ENCODE measurements at regions of chr1 and their contacts with region 1.

Region 1: GRCh38 chr1:51044834-51045233 is 57.2 kb upstream of the C1orf185 start:
- DNase-seq: peak in 3 of 14 experiments; percentile 13 to 17 (median 16)
- ATAC-seq: no peak
- H3K4me3 ChIP-seq: no peak overlapping the region
- H3K4me3 Mint-ChIP-seq: no peak overlapping the region
- H3K27ac ChIP-seq: no peak overlapping the region
- H3K27ac Mint-ChIP-seq: no peak overlapping the region
- H3K4me1 ChIP-seq: no peaks in the 10 kb centered on the region
- H3K4me1 Mint-ChIP-seq: no peaks in the 10 kb centered on the region
- H3K27me3 ChIP-seq: peaks cover 0 to 5% of the 10 kb centered on the region in 2 experiments
- H3K27me3 Mint-ChIP-seq: peaks cover 25% of the 10 kb centered on the region
- CTCF ChIP-seq: peak; percentile 53

Region 2: DNA sequence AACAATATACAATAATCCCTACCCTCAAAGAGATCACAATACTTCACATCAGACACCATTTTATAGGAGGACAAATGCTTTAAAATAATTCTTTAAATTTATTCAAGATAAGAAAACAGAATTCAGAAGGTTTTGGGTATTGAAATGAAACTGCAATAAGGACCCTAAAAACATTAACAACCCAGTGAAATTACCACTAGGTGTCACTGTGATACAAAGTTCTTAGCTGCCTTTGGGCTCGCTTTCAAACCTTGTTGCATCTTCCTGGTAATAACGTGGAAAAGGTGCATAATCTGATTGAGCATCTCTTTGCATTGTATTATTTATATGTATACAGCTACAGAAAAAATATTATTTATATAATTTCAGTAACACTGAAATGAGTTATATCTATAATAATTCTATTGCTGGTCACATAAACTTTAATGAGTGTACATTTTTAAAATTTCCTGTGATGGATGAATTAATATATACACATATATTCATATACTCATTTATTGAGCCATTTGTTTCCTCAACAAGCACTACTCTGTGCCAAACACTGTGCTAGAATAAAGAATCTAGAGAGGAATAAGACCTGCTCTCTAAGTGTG is 270.0 kb before region 1 on chr1:
- CTCF ChIA-PET with region 1: no interaction called
- POLR2A ChIA-PET with region 1: no interaction called
- intact Hi-C with region 1: loop called (anchors 2 kb)
- DNase-seq: peak in 4 of 14 experiments; percentile 8 to 68 (median 57)
- ATAC-seq: no peak
- H3K4me3 ChIP-seq: no peak overlapping the region
- H3K4me3 Mint-ChIP-seq: no peak overlapping the region
- H3K27ac ChIP-seq: no peak overlapping the region
- H3K27ac Mint-ChIP-seq: no peak overlapping the region
- H3K4me1 ChIP-seq: no peaks in the 10 kb centered on the region
- H3K4me1 Mint-ChIP-seq: peaks cover 8% of the 10 kb centered on the region
- H3K27me3 ChIP-seq: no peaks in the 10 kb centered on the region
- H3K27me3 Mint-ChIP-seq: no peaks in the 10 kb centered on the region
- CTCF ChIP-seq: peak; percentile 86

Region 3: DNA sequence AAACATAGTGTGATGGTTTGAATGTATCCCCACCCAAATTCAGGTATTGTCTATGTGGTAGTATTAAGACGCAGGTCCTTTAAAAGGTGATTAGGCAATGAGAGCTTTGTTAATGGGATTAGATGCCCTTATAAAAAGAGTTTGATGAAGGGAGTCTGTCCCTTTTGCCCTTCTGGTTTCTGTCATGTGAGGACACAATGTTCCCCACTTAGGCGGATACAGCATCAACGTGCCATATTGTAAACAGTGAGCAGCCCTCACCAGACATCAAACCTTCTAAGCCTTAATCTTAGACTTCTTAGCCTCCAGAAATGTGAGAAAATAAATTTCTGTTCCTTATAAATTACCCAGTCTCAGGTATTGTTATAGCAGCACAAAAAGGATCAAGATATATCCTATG is 257.6 kb before region 1 on chr1:
- CTCF ChIA-PET with region 1: no interaction called
- POLR2A ChIA-PET with region 1: no interaction called
- intact Hi-C with region 1: no loop called
- DNase-seq: no peak
- ATAC-seq: no peak
- H3K4me3 ChIP-seq: no peak overlapping the region
- H3K4me3 Mint-ChIP-seq: no peak overlapping the region
- H3K27ac ChIP-seq: no peak overlapping the region
- H3K27ac Mint-ChIP-seq: no peak overlapping the region
- H3K4me1 ChIP-seq: no peaks in the 10 kb centered on the region
- H3K4me1 Mint-ChIP-seq: peaks cover 25% of the 10 kb centered on the region
- H3K27me3 ChIP-seq: no peaks in the 10 kb centered on the region
- H3K27me3 Mint-ChIP-seq: no peaks in the 10 kb centered on the region
- CTCF ChIP-seq: no peak

Region 4: GRCh38 chr1:50873458-50874187 is 171.2 kb before region 1 on chr1:
- CTCF ChIA-PET with region 1: no interaction called
- POLR2A ChIA-PET with region 1: no interaction called
- intact Hi-C with region 1: loop called in 1 of 2 experiments (anchors 5 kb)
- DNase-seq: peak; percentile 34 to 77 (median 57)
- ATAC-seq: peak; percentile 76
- H3K4me3 ChIP-seq: peak overlapping the region; percentile 18
- H3K4me3 Mint-ChIP-seq: no peak overlapping the region
- H3K27ac ChIP-seq: no peak overlapping the region
- H3K27ac Mint-ChIP-seq: no peak overlapping the region
- H3K4me1 ChIP-seq: no peaks in the 10 kb centered on the region
- H3K4me1 Mint-ChIP-seq: peaks cover 17% of the 10 kb centered on the region
- H3K27me3 ChIP-seq: no peaks in the 10 kb centered on the region
- H3K27me3 Mint-ChIP-seq: no peaks in the 10 kb centered on the region
- CTCF ChIP-seq: peak; percentile 93

Region 5: DNA sequence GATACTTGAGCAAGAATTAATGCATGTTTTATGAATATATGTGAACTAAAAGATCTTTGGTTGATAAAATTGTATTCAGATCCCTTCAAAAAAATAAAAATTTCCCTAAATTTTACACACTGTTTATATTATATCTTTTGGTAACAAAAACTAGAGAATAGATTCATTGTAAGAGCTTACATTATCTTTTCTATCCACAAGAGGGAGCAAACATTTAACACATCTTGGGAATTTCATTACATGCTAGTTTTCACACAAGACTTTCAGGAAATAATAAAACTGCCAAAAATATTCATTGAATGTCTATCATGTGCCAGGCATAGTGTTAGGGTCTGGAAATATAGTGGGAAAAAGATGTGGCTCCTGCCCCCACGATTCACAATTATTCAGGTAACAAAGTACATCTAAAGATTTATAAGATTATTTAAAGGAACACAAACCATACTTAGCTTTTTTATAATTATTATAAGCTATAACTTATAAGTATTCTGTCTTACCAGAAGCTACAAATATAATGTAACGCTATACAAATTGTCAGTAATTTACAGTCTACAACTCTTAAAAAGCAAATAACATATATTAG is 115.4 kb before region 1 on chr1:
- CTCF ChIA-PET with region 1: no interaction called
- POLR2A ChIA-PET with region 1: no interaction called
- intact Hi-C with region 1: loop called (anchors 2 kb)
- DNase-seq: peak in 3 of 14 experiments; percentile 39 to 50 (median 46)
- ATAC-seq: no peak
- H3K4me3 ChIP-seq: no peak overlapping the region
- H3K4me3 Mint-ChIP-seq: no peak overlapping the region
- H3K27ac ChIP-seq: no peak overlapping the region
- H3K27ac Mint-ChIP-seq: no peak overlapping the region
- H3K4me1 ChIP-seq: no peaks in the 10 kb centered on the region
- H3K4me1 Mint-ChIP-seq: peaks cover 25% of the 10 kb centered on the region
- H3K27me3 ChIP-seq: no peaks in the 10 kb centered on the region
- H3K27me3 Mint-ChIP-seq: no peaks in the 10 kb centered on the region
- CTCF ChIP-seq: peak; percentile 69

Region 6: DNA sequence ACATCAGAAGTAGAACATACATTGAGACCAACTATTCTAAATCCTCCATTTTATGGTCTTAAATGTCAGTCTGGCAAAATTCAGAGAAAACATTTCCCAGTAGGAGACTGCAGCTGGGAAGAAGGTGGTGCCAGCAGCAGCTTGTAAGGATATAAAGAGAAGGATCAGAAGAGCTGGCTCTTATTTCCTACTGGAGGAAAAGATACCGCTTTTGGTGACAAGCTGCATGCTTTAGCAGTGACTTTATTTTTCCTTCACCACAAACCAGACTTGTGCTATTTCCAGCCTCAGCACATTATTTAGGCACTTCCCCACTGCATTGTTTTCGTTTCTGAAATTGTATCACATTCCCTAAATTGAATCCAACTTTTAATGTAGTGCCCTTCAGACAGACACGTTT is 219.6 kb after region 1 on chr1:
- CTCF ChIA-PET with region 1: no interaction called
- POLR2A ChIA-PET with region 1: no interaction called
- intact Hi-C with region 1: no loop called
- DNase-seq: no peak
- ATAC-seq: no peak
- H3K4me3 ChIP-seq: no peak overlapping the region
- H3K4me3 Mint-ChIP-seq: no peak overlapping the region
- H3K27ac ChIP-seq: no peak overlapping the region
- H3K27ac Mint-ChIP-seq: peak overlapping the region; percentile 37
- H3K4me1 ChIP-seq: peaks cover 23% of the 10 kb centered on the region
- H3K4me1 Mint-ChIP-seq: peaks cover 83% of the 10 kb centered on the region
- H3K27me3 ChIP-seq: no peaks in the 10 kb centered on the region
- H3K27me3 Mint-ChIP-seq: no peaks in the 10 kb centered on the region
- CTCF ChIP-seq: no peak